ENCODE measurements at regions of chr16 and their contacts with region 1.

Region 1: DNA sequence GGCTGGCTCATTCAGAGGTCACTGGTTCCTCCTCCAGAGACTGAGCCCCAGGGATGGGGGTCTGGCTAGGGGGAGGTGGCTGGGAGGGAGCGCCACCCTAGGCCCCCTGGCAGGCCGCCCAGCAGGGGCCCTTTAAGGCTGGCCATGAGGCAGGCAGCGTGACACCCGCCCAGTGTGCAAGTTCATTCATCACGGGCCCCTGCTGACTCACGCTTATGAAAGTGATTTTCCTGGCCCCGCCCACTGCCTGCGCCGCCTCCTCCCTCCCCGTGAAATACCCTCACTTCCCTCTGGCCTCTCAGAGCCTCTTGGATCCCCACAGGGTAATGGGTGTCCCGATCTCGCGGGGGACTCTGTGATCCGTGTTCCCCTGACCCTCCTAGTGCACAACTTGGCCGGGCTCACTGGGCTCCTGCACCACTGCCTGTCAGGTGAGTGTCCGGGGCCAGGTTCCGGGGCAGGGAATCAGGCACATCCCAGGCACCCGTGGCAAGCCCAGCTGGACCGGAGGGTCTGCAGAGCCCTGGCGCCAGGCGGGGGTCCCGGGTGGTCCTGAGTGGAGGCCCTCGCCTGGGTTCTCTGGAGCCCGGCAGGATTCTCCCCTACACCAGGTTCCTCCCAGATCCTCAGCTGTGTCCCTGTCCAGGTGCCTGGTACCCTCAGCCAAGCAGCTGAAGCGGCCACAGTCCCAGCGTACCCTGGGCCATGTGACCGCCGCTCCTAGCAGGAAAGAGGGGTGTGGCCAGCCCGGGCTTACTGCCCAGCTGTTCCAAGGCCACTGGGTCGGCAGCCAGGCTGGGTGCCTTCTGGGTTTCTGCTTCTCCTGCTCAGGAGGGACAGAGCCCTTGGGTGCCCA is at the start of gene OSGIN1:
- DNase-seq: peak in 1 of 2 experiments; percentile 72
- H3K4me3 ChIP-seq: peak within 1 kb of the TSS; percentile 4 to 47 (median 14); a peak in 6 of 8 replicates
- H3K27ac ChIP-seq: no peak within 1 kb of the TSS
- H3K4me1 ChIP-seq: peaks cover 2 to 7% (median 4%) of the 10 kb centered on the region in 4 experiments; a peak in 6 of 7 replicates
- H3K27me3 ChIP-seq: no peaks in the 10 kb centered on the region
- CTCF ChIP-seq: no peak
- EP300 ChIP-seq: no peak
- POLR2A ChIP-seq: no peak
- RAD21 ChIP-seq: no peak
- total RNA-seq, gene OSGIN1: 0.48 and 0.58 TPM in 2 replicates

Region 2: GRCh38 chr16:83964684-83965443 is 11.7 kb after region 1 on chr16:
- CTCF ChIA-PET with region 1: interaction called, 47 read pairs
- POLR2A ChIA-PET with region 1: no interaction called
- DNase-seq: no peak
- H3K4me3 ChIP-seq: no peak overlapping the region
- H3K27ac ChIP-seq: no peak overlapping the region
- H3K4me1 ChIP-seq: peaks cover 0 to 5% (median 3%) of the 10 kb centered on the region in 4 experiments; a peak in 4 of 7 replicates
- H3K27me3 ChIP-seq: peaks cover 0 to 10% (median 8%) of the 10 kb centered on the region in 4 experiments; a peak in 6 of 7 replicates
- CTCF ChIP-seq: no peak
- EP300 ChIP-seq: no peak
- POLR2A ChIP-seq: no peak
- RAD21 ChIP-seq: no peak

Region 3: GRCh38 chr16:83980794-83981193 is 27.6 kb after region 1 on chr16:
- CTCF ChIA-PET with region 1: interaction called, 17 read pairs
- POLR2A ChIA-PET with region 1: no interaction called
- DNase-seq: no peak
- H3K4me3 ChIP-seq: no peak overlapping the region
- H3K27ac ChIP-seq: no peak overlapping the region
- H3K4me1 ChIP-seq: no peaks in the 10 kb centered on the region
- H3K27me3 ChIP-seq: no peaks in the 10 kb centered on the region
- CTCF ChIP-seq: no peak
- EP300 ChIP-seq: no peak
- POLR2A ChIP-seq: no peak
- RAD21 ChIP-seq: no peak

Region 4: GRCh38 chr16:84000989-84001642 is 47.9 kb after region 1 on chr16:
- CTCF ChIA-PET with region 1: interaction called, 10 read pairs
- POLR2A ChIA-PET with region 1: no interaction called
- DNase-seq: no peak
- H3K4me3 ChIP-seq: no peak overlapping the region
- H3K27ac ChIP-seq: no peak overlapping the region; the same call in 1 of the 2 replicates
- H3K4me1 ChIP-seq: peaks cover 0 to 2% (median under 1%) of the 10 kb centered on the region in 4 experiments; a peak in 3 of 7 replicates
- H3K27me3 ChIP-seq: no peaks in the 10 kb centered on the region; a peak in 1 of 7 replicates
- CTCF ChIP-seq: no peak
- EP300 ChIP-seq: no peak
- POLR2A ChIP-seq: no peak
- RAD21 ChIP-seq: no peak

Region 5: GRCh38 chr16:84044118-84044488 is 90.9 kb after region 1 on chr16:
- CTCF ChIA-PET with region 1: interaction called, 267 read pairs
- POLR2A ChIA-PET with region 1: interaction called, 4 read pairs
- DNase-seq: peak in 1 of 2 experiments; percentile 19
- H3K4me3 ChIP-seq: no peak overlapping the region
- H3K27ac ChIP-seq: no peak overlapping the region
- H3K4me1 ChIP-seq: peaks cover 0 to 12% (median 9%) of the 10 kb centered on the region in 4 experiments; a peak in 6 of 7 replicates
- H3K27me3 ChIP-seq: no peaks in the 10 kb centered on the region; a peak in 1 of 7 replicates
- CTCF ChIP-seq: peak; percentile 61 to 76 (median 76)
- EP300 ChIP-seq: no peak
- POLR2A ChIP-seq: no peak
- RAD21 ChIP-seq: peak; percentile 66 to 69

Region 6: GRCh38 chr16:84357191-84357651 is 404.1 kb after region 1 on chr16:
- CTCF ChIA-PET with region 1: no interaction called
- POLR2A ChIA-PET with region 1: no interaction called
- DNase-seq: no peak
- H3K4me3 ChIP-seq: no peak overlapping the region
- H3K27ac ChIP-seq: no peak overlapping the region
- H3K4me1 ChIP-seq: peaks cover 0 to 2% (median 0%) of the 10 kb centered on the region in 4 experiments; a peak in 3 of 7 replicates
- H3K27me3 ChIP-seq: no peaks in the 10 kb centered on the region
- CTCF ChIP-seq: no peak
- EP300 ChIP-seq: no peak
- POLR2A ChIP-seq: no peak
- RAD21 ChIP-seq: no peak